CD8-positive, alpha-beta T cell (primary cell): ENCODE measurements at regions of chr15 and their contacts with region 1.

Region 1: DNA sequence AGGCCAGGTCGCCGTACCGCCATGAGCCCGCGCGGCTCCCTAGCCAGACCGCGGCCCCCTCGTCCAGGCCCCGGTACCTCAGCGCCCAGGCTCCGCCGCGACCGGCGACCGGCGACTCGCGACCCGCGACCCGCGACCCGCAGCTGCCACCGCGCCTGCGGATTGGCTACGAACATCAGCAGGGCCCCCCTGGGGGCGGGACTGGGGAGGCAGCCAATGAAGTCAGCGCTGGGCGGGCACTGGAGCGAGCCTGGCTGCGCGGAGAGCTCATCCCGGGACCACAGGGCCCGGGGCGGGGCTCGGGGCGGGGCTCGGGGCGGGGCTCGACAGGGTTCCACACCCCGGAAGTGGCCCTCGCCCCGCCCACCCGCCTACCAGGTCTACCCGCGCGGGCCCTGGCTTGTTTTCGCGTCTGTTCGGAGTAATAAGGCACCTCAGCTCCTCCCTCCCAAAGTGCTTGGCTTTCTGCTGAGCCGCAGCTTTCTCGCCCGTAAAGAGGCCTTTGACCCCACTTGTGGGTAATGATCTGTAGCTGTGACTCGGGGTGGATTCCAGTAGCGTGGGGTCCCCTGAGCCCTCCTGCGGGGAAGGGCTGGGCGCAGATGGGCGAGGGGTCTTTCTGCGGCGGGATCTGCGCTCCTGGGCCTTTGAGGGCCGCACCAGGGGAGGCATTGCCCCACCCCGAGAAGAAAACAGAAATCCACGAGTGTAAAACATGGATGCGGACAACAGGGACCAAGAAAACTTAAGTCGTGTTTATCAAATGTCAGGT is at the start of gene LYSMD4:
- DNase-seq: peak; percentile 97 to 99 (median 98)
- ATAC-seq: peak; percentile 99
- H3K4me3 ChIP-seq: peak within 1 kb of the TSS; percentile 69 to 80
- H3K4me3 Mint-ChIP-seq: peak within 1 kb of the TSS; percentile 89
- H3K27ac ChIP-seq: peak within 1 kb of the TSS; percentile 62 to 87
- H3K27ac Mint-ChIP-seq: peak within 1 kb of the TSS; percentile 95
- H3K4me1 ChIP-seq: peaks cover 13% of the 10 kb centered on the region
- H3K4me1 Mint-ChIP-seq: peaks cover 19% of the 10 kb centered on the region
- H3K27me3 ChIP-seq: no peaks in the 10 kb centered on the region
- H3K27me3 Mint-ChIP-seq: no peaks in the 10 kb centered on the region
- CTCF ChIP-seq: no peak
- total RNA-seq, gene LYSMD4: 7.6 to 7.7 TPM

Region 2: GRCh38 chr15:98647774-98648653 is 1085.4 kb before region 1 on chr15 and contains the start of gene IGF1R:
- CTCF ChIA-PET with region 1: no interaction called
- POLR2A ChIA-PET with region 1: no interaction called
- intact Hi-C with region 1: loop called in 1 of 2 experiments (anchors 5 kb)
- DNase-seq: peak; percentile 75 to 94 (median 85)
- ATAC-seq: peak; percentile 74
- H3K4me3 ChIP-seq: peak within 1 kb of the TSS; percentile 74 to 88
- H3K4me3 Mint-ChIP-seq: peak within 1 kb of the TSS; percentile 89
- H3K27ac ChIP-seq: peak within 1 kb of the TSS in 1 of 2 experiments; percentile 88
- H3K27ac Mint-ChIP-seq: peak within 1 kb of the TSS; percentile 95
- H3K4me1 ChIP-seq: peaks cover 9% of the 10 kb centered on the region
- H3K4me1 Mint-ChIP-seq: peaks cover 28% of the 10 kb centered on the region
- H3K27me3 ChIP-seq: peaks cover 0 to 10% of the 10 kb centered on the region in 2 experiments
- H3K27me3 Mint-ChIP-seq: peaks cover 15% of the 10 kb centered on the region
- CTCF ChIP-seq: no peak
- total RNA-seq, gene IGF1R: 30.1 to 33.8 TPM

Region 3: DNA sequence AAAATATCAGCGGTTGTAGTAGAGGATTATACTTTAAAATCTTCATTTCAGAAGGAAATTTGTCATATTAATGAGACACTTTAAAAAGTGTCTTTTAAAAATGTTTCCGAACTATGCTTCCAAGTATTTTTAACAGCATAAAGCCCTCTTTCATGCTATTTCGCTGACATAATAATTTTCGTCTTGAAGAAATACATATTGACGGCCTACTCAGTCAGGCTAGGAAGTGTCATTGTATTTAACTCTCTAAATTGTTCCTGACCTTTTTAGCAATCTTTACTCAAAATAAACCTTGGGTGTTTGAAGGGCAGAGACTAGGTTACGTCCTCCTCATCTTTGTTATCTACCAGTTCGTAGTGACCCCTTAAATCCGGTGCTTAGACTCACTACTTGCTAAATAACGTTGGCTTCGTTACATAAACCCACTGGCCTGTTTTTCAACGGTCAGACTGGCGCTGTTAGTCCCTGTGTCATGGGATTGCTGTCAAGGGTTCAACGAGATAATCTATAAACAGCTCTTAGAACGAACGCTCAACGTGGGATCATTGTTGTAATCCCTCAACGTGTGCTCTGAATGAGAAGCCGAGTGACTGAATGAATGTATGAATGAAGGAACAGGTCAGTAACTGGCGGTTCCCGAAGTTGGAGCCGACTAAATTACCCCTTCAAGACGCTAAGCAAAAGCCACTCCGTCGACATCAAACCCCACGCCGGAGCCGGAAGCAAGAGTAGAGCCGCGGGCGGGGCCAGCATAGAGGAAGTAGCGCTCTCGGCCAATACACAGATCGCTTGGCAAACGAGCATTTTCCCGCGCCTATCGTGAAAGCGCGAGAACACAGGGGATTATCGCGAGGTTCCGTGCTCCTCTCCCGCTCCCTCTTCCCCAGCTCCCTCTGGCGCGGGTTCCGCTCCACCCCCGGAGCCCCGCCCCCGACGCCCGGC is 482.7 kb before region 1 on chr15:
- CTCF ChIA-PET with region 1: no interaction called
- POLR2A ChIA-PET with region 1: interaction called, 3 read pairs
- intact Hi-C with region 1: loop called (anchors 1 kb)
- DNase-seq: peak; percentile 83 to 98 (median 92)
- ATAC-seq: peak; percentile 95
- H3K4me3 ChIP-seq: peak overlapping the region; percentile 55 to 59
- H3K4me3 Mint-ChIP-seq: peak overlapping the region; percentile 90
- H3K27ac ChIP-seq: peak overlapping the region; percentile 25 to 79
- H3K27ac Mint-ChIP-seq: peak overlapping the region; percentile 89
- H3K4me1 ChIP-seq: peaks cover 19% of the 10 kb centered on the region
- H3K4me1 Mint-ChIP-seq: peaks cover 29% of the 10 kb centered on the region
- H3K27me3 ChIP-seq: no peaks in the 10 kb centered on the region
- H3K27me3 Mint-ChIP-seq: no peaks in the 10 kb centered on the region
- CTCF ChIP-seq: no peak

Region 4: DNA sequence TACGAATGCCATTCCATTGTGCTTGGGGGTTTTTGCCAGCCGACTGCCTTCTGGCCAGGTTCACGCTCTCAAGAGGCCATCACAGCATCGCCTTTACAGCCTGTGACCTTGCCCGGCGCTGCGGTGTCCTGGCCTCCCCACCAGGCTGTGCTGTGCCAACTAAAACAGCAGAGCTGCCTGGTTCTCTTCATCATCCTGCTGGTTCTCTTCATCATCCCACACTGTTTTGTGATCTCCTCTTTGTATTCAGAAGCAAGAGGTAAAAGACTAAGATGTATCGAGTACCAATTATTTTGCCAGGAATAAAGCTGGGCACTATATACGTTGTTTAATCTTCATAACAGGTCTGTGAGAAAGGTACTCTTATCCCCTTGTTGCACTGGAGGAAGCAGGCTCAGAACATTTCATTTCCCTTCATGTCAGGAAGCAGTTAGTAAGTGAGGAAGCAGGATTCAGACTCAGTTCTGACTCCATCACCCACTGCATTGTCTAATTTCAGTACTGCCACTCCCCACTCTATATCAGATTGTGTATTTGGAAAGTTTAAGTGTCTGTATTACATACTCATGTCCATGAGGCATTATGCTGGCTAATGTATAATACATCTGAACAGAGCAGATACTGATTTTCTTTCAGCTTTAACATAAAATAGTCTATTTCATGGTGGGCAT is 389.4 kb before region 1 on chr15:
- CTCF ChIA-PET with region 1: interaction called, 4 read pairs
- POLR2A ChIA-PET with region 1: no interaction called
- intact Hi-C with region 1: loop called in 1 of 2 experiments (anchors 1 kb)
- DNase-seq: peak; percentile 12 to 76 (median 53)
- ATAC-seq: peak; percentile 79
- H3K4me3 ChIP-seq: no peak overlapping the region
- H3K4me3 Mint-ChIP-seq: no peak overlapping the region
- H3K27ac ChIP-seq: no peak overlapping the region
- H3K27ac Mint-ChIP-seq: no peak overlapping the region
- H3K4me1 ChIP-seq: no peaks in the 10 kb centered on the region
- H3K4me1 Mint-ChIP-seq: peaks cover 5% of the 10 kb centered on the region
- H3K27me3 ChIP-seq: no peaks in the 10 kb centered on the region
- H3K27me3 Mint-ChIP-seq: no peaks in the 10 kb centered on the region
- CTCF ChIP-seq: peak; percentile 62

Region 5: GRCh38 chr15:99719096-99719541 is 14.3 kb before region 1 on chr15:
- CTCF ChIA-PET with region 1: interaction called, 6 read pairs
- POLR2A ChIA-PET with region 1: interaction called, 9 read pairs
- intact Hi-C with region 1: loop called in 1 of 2 experiments (anchors 1 kb)
- DNase-seq: no peak
- ATAC-seq: no peak
- H3K4me3 ChIP-seq: no peak overlapping the region
- H3K4me3 Mint-ChIP-seq: no peak overlapping the region
- H3K27ac ChIP-seq: no peak overlapping the region
- H3K27ac Mint-ChIP-seq: no peak overlapping the region
- H3K4me1 ChIP-seq: peaks cover 24% of the 10 kb centered on the region
- H3K4me1 Mint-ChIP-seq: peaks cover 23% of the 10 kb centered on the region
- H3K27me3 ChIP-seq: no peaks in the 10 kb centered on the region
- H3K27me3 Mint-ChIP-seq: no peaks in the 10 kb centered on the region
- CTCF ChIP-seq: no peak

Region 6: GRCh38 chr15:100602064-100602822 is 868.8 kb after region 1 on chr15 and contains the starts of genes ASB7 and LINS1:
- CTCF ChIA-PET with region 1: no interaction called
- POLR2A ChIA-PET with region 1: no interaction called
- intact Hi-C with region 1: loop called (anchors 2 to 5 kb)
- DNase-seq: peak; percentile 99 to 100 (median 100)
- ATAC-seq: peak; percentile 89
- H3K4me3 ChIP-seq: peak within 1 kb of the TSS; percentile 90 to 95
- H3K4me3 Mint-ChIP-seq: no peak within 1 kb of the TSS
- H3K27ac ChIP-seq: peak within 1 kb of the TSS; percentile 71 to 94
- H3K27ac Mint-ChIP-seq: peak within 1 kb of the TSS; percentile 93
- H3K4me1 ChIP-seq: peaks cover 58% of the 10 kb centered on the region
- H3K4me1 Mint-ChIP-seq: peaks cover 64% of the 10 kb centered on the region
- H3K27me3 ChIP-seq: no peaks in the 10 kb centered on the region
- H3K27me3 Mint-ChIP-seq: no peaks in the 10 kb centered on the region
- CTCF ChIP-seq: no peak
- total RNA-seq, gene ASB7: 17.2 to 19.9 TPM
- total RNA-seq, gene LINS1: 42.8 to 45.9 TPM